ENCODE measurements at regions of chr5 and their contacts with region 1.

Region 1: GRCh38 chr5:134758504-134759341 is at the start of gene DDX46:
- DNase-seq: peak; percentile 99
- H3K4me3 Mint-ChIP-seq: peak within 1 kb of the TSS; percentile 99
- H3K27ac Mint-ChIP-seq: peak within 1 kb of the TSS; percentile 95
- H3K4me1 Mint-ChIP-seq: peaks cover 31% of the 10 kb centered on the region
- H3K27me3 Mint-ChIP-seq: no peaks in the 10 kb centered on the region
- total RNA-seq, gene DDX46: 83.8 and 89.4 TPM in 2 replicates

Region 2: DNA sequence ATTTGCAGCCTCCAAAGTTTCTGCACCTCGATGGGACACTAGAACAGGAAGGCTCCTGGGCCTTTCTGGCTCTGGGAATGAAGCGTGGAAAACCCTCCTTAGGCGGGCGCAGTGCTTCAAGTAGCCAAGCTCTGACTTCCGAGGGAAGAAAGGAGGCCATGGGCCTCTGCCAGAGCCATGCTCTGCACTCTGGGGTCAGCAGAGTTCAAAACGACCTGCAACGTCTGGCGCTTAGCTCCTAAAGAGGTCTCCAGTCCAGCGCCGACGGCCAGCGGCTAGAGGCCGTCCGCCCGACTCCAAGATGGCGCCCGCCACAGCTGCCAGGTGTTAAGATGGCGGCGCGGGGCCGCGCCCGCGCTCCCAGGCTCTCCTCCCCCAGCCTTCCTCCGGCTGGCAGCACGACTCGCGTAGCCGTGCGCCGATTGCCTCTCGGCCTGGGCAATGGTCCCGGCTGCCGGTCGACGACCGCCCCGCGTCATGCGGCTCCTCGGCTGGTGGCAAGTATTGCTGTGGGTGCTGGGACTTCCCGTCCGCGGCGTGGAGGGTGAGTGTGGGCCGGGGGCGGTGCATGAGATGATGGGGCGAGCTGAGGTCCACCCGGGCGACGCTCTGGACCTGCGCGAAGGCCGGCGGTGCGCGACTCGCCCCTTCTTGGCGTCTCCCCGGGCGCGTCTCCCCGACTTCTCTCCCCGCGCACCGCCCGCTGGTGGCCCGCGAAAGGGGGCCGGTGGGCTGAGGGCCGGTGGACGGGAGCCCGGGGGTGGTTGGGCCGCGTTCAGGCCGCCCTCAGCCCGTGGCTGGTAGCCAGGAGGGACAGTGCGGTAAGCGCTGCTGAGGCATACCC is 115.5 kb after region 1 on chr5 and contains the start of gene TXNDC15:
- intact Hi-C with region 1: loop called (anchors 1 kb)
- DNase-seq: peak; percentile 95
- H3K4me3 Mint-ChIP-seq: peak within 1 kb of the TSS; percentile 99
- H3K27ac Mint-ChIP-seq: peak within 1 kb of the TSS; percentile 98
- H3K4me1 Mint-ChIP-seq: peaks cover 30% of the 10 kb centered on the region
- H3K27me3 Mint-ChIP-seq: no peaks in the 10 kb centered on the region
- total RNA-seq, gene TXNDC15: 46.2 and 51.3 TPM in 2 replicates